ENCODE measurements at regions of chr4 and their contacts with region 1.

Region 1: DNA sequence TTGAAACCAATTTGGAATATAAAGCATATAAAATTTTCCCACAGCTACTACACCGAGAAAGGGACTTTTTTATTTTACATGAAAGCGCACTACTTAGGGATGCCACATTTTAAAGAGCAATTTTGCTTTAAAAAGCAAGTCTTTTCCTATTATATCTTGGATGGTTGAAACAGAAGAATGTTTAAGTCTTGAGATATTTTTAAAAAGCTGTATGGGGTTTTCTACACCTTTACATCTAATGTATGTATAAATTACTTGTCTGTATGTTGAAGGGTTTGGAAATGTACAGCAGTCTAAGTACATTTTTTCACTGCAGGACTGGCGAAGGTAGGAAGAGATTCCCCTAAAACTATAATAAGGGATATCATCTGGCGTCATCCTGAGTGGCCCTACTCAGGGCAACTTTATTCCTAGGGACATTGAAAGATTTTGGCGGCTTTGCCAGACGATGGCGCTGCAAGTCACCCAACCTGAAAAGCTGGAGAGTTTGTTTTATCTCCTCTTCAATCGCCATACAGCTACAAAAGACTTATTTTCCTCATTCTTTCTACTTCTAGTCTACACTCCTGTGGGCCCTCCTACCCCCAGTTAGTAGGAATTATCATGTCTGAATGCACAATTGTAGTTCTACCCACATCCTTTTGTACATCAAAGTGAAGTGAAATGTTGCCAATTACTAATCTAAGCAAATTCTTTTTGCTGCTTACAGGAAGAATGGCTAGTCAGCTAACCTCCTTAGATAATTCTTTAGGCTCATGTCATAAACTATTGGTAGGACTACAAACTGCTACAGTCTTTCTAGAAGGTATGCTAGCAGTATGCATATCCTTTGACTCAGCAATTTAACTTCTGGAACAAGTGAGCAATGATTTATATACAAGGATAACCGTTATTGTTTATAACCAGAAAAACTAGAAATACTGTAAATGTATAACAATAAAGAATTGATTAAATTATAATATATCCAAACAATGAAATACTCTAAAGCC is 782 bp upstream of the NEK1 start:
- DNase-seq: no peak
- ATAC-seq: peak; percentile 67
- H3K4me3 ChIP-seq: peak overlapping the region; percentile 67
- H3K27ac ChIP-seq: peak overlapping the region; percentile 30; the same call in 1 of the 2 replicates
- H3K4me1 ChIP-seq: peaks cover 3% of the 10 kb centered on the region
- H3K27me3 ChIP-seq: no peaks in the 10 kb centered on the region
- CTCF ChIP-seq: peak; percentile 73 to 81 (median 74)
- EP300 ChIP-seq: no peak
- POLR2A ChIP-seq: no peak
- RAD21 ChIP-seq: peak; percentile 72

Region 2: GRCh38 chr4:169640261-169640870 is 27.2 kb after region 1 on chr4:
- CTCF ChIA-PET with region 1: interaction called, 12 read pairs
- POLR2A ChIA-PET with region 1: no interaction called
- RAD21 ChIA-PET with region 1: no interaction called
- SMC1A ChIA-PET with region 1: no interaction called
- in situ Hi-C with region 1: no loop called
- intact Hi-C with region 1: no loop called
- DNase-seq: no peak
- ATAC-seq: no peak
- H3K4me3 ChIP-seq: no peak overlapping the region
- H3K27ac ChIP-seq: no peak overlapping the region
- H3K4me1 ChIP-seq: no peaks in the 10 kb centered on the region
- H3K27me3 ChIP-seq: no peaks in the 10 kb centered on the region
- CTCF ChIP-seq: no peak
- EP300 ChIP-seq: no peak
- POLR2A ChIP-seq: no peak
- RAD21 ChIP-seq: no peak

Region 3: DNA sequence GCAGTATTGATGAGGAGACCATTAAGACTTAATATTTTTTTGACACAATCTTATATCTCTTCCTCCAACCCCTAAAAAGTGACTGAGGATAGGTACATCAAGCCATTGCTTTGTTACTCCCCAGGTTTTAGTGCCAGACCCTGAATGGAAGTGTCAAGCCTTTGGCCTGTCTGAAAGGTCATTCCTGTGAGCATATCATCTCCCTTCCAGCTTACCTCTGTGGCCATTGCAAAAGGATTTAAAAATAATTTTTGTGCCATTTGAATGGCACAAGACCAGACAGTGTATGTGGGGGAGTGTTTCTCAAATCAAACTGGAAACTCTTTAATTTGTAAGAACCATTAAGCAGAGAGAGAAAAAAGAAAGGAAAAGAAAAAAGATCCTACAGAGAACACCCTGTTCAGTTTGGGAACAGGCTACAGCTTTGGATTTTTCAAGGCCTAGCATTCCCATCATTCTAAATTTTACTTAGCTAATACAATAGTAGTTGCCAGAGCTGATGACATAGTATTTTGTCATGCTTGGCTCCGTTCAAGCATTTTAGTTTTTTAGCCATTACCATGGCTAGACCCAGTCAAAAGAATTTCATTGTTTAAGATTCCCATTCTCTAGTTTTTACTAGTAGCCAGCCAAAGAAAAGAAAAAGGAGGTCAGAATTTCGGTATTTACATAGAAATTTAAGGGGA is 94.9 kb after region 1 on chr4:
- CTCF ChIA-PET with region 1: interaction called, 12 read pairs
- POLR2A ChIA-PET with region 1: no interaction called
- RAD21 ChIA-PET with region 1: interaction called, 5 read pairs
- SMC1A ChIA-PET with region 1: interaction called, 3 read pairs
- in situ Hi-C with region 1: no loop called
- intact Hi-C with region 1: no loop called
- DNase-seq: no peak
- ATAC-seq: no peak
- H3K4me3 ChIP-seq: no peak overlapping the region
- H3K27ac ChIP-seq: no peak overlapping the region
- H3K4me1 ChIP-seq: no peaks in the 10 kb centered on the region
- H3K27me3 ChIP-seq: no peaks in the 10 kb centered on the region
- CTCF ChIP-seq: no peak
- EP300 ChIP-seq: no peak
- POLR2A ChIP-seq: no peak
- RAD21 ChIP-seq: no peak

Region 4: DNA sequence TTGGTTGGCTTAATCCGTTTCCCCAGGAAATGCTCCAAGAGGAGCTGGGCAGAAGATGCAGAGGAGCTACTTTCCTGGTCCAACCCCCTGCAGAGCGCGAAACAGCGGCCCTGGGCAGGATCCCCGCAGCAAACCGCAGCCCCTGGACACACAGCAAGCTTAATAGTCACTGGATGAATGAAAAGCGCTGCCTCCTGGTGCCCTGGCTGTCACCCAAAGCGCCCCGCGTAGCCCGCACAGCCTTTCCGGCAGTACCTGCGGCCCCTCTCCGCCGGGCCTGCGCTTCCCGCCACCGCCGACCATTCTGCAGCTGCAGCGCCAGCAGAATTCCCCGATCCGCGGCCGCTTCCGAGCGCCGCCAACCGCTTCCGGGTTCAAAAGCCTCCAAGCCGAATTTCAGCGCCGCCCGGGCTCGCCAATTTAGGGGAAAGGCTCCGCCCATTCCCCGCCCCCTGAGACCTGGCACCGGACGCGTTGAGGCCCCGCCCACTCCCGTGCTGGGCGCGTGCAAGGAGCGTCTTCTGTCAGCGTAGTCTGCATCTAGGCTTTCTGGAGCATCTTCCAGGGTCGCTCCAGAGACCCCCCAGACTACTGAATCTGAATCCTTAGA is 144.5 kb after region 1 on chr4 and contains the start of gene HPF1:
- CTCF ChIA-PET with region 1: interaction called, 9 read pairs
- POLR2A ChIA-PET with region 1: interaction called, 5 read pairs
- RAD21 ChIA-PET with region 1: interaction called, 3 read pairs
- SMC1A ChIA-PET with region 1: interaction called, 7 read pairs
- in situ Hi-C with region 1: no loop called
- intact Hi-C with region 1: loop called (anchors 5 kb)
- DNase-seq: peak; percentile 53
- ATAC-seq: peak; percentile 94
- H3K4me3 ChIP-seq: peak within 1 kb of the TSS; percentile 92
- H3K27ac ChIP-seq: 0 out of 2 replicates have a peak within 1 kb of the TSS, but pooled peaks have one; percentile 9
- H3K4me1 ChIP-seq: 0 out of 2 replicates have a peak, but pooled peaks cover 6% of the 10 kb centered on the region
- H3K27me3 ChIP-seq: no peaks in the 10 kb centered on the region
- CTCF ChIP-seq: 0 out of 6 replicates have a peak, but pooled peaks of 1 of the 3 experiments have one; percentile 13
- EP300 ChIP-seq: no peak
- POLR2A ChIP-seq: peak; percentile 77
- RAD21 ChIP-seq: no peak
- polyA plus RNA-seq, gene HPF1: 47.9 to 56.4 TPM

Region 5: GRCh38 chr4:170027181-170027829 is 414.1 kb after region 1 on chr4:
- CTCF ChIA-PET with region 1: interaction called, 3 read pairs
- POLR2A ChIA-PET with region 1: interaction called, 3 read pairs
- RAD21 ChIA-PET with region 1: no interaction called
- SMC1A ChIA-PET with region 1: interaction called, 3 read pairs
- in situ Hi-C with region 1: no loop called
- intact Hi-C with region 1: loop called (anchors 5 kb)
- DNase-seq: peak; percentile 35
- ATAC-seq: peak; percentile 94
- H3K4me3 ChIP-seq: peak overlapping the region; percentile 56
- H3K27ac ChIP-seq: no peak overlapping the region
- H3K4me1 ChIP-seq: peaks cover 5% of the 10 kb centered on the region
- H3K27me3 ChIP-seq: peaks cover 0 to 12% of the 10 kb centered on the region in 2 experiments; a peak in 3 of 4 replicates
- CTCF ChIP-seq: no peak
- EP300 ChIP-seq: no peak
- POLR2A ChIP-seq: no peak
- RAD21 ChIP-seq: no peak